ENCODE measurements at regions of chr19 and their contacts with region 1.

Region 1: GRCh38 chr19:13574933-13575332 is 68.7 kb upstream of the CACNA1A start:
- DNase-seq: no peak
- H3K4me3 ChIP-seq: no peak overlapping the region
- H3K27ac ChIP-seq: no peak overlapping the region
- H3K4me1 ChIP-seq: no peaks in the 10 kb centered on the region
- H3K27me3 ChIP-seq: no peaks in the 10 kb centered on the region
- CTCF ChIP-seq: peak; percentile 15 to 34
- POLR2A ChIP-seq: no peak

Region 2: GRCh38 chr19:13277104-13277809 is 297.7 kb before region 1 on chr19:
- CTCF ChIA-PET with region 1: interaction called, 44 read pairs
- POLR2A ChIA-PET with region 1: no interaction called
- dilution Hi-C with region 1: no loop called
- intact Hi-C with region 1: no loop called
- DNase-seq: peak; percentile 78
- H3K4me3 ChIP-seq: no peak overlapping the region
- H3K27ac ChIP-seq: peak overlapping the region; percentile 4
- H3K4me1 ChIP-seq: peaks cover 5% of the 10 kb centered on the region
- H3K27me3 ChIP-seq: no peaks in the 10 kb centered on the region
- CTCF ChIP-seq: peak; percentile 41 to 61
- POLR2A ChIP-seq: no peak

Region 3: DNA sequence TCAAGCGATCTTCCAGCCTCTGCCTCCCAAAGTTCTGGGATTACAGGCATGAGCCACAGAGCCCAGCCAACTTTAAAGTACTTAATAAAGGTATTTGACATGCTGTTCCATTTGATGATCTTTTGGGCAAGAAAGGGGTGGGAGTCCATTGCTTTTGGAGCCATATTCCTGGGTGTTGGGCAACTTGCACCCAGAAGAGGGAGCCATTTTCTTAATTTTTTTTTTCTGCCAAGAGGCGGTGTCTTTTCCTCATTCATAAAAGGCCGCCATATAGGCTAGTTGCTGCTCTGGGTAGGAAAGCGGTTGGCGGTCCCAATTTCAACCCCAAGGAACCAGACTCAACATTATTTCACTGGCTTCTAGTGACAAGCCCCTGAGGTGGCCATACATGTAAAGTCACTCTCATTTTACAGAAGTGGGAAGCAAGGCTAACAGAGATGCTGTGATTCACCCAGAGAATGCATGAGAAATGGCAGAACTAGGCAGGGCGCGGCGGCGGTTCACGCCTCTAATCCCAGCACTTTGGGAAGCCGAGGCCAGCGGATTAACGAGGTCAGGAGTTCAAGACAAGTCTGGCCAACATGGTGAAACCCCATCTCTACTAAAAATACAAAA is 208.3 kb before region 1 on chr19:
- CTCF ChIA-PET with region 1: interaction called, 11 read pairs
- POLR2A ChIA-PET with region 1: no interaction called
- dilution Hi-C with region 1: no loop called
- intact Hi-C with region 1: no loop called
- DNase-seq: peak; percentile 28
- H3K4me3 ChIP-seq: no peak overlapping the region
- H3K27ac ChIP-seq: no peak overlapping the region
- H3K4me1 ChIP-seq: no peaks in the 10 kb centered on the region
- H3K27me3 ChIP-seq: no peaks in the 10 kb centered on the region
- CTCF ChIP-seq: peak; percentile 46 to 48
- POLR2A ChIP-seq: no peak

Region 4: GRCh38 chr19:13537454-13537853 is 37.5 kb before region 1 on chr19:
- CTCF ChIA-PET with region 1: no interaction called
- POLR2A ChIA-PET with region 1: no interaction called
- dilution Hi-C with region 1: no loop called
- intact Hi-C with region 1: no loop called
- DNase-seq: no peak
- H3K4me3 ChIP-seq: no peak overlapping the region
- H3K27ac ChIP-seq: no peak overlapping the region
- H3K4me1 ChIP-seq: no peaks in the 10 kb centered on the region
- H3K27me3 ChIP-seq: no peaks in the 10 kb centered on the region
- CTCF ChIP-seq: no peak
- POLR2A ChIP-seq: no peak

Region 5: GRCh38 chr19:13588957-13589833 is 14.3 kb after region 1 on chr19:
- CTCF ChIA-PET with region 1: interaction called, 27 read pairs
- POLR2A ChIA-PET with region 1: no interaction called
- dilution Hi-C with region 1: no loop called
- intact Hi-C with region 1: no loop called
- DNase-seq: peak; percentile 55
- H3K4me3 ChIP-seq: no peak overlapping the region
- H3K27ac ChIP-seq: no peak overlapping the region
- H3K4me1 ChIP-seq: no peaks in the 10 kb centered on the region
- H3K27me3 ChIP-seq: no peaks in the 10 kb centered on the region
- CTCF ChIP-seq: peak; percentile 96 to 99
- POLR2A ChIP-seq: no peak